Caco-2 (cell line): ENCODE measurements at regions of chr3 and their contacts with region 1.

Region 1: DNA sequence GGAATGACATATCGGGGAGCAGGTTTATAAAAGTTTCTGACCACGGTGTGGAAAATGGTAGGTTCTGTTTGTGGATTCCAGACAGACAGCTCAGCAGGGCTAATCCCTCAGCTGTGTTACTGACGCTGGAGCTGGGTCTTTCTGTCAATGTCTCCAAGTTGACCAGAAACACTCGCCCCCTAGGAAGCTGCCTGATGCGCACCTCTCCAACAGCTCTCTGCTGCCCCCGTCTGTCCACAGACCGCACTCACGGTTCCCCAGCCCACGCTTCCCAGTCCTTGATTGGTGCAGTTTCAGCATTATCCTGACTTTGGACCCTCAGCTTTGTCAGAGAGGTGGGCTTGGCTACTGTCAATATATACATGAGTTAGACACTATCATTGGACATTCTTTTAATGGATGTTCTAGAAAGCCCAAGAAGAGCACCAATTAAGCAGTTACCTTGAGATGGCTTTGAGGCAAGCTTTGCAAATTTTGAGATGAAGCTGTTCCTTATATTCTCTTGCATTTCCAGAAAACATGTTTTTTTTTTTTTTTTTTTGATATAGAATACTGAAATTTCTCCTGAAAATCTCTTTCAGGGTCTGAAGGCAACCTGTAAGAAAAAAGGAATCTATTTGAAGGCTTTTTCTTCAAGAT is 98.9 kb upstream of the TBC1D5 start:
- DNase-seq: peak; percentile 75 to 86
- H3K4me3 ChIP-seq: no peak overlapping the region
- H3K4me3 Mint-ChIP-seq: no peak overlapping the region
- H3K27ac Mint-ChIP-seq: no peak overlapping the region
- H3K4me1 ChIP-seq: no peaks in the 10 kb centered on the region
- H3K4me1 Mint-ChIP-seq: peaks cover 5% of the 10 kb centered on the region
- H3K27me3 ChIP-seq: no peaks in the 10 kb centered on the region
- H3K27me3 Mint-ChIP-seq: no peaks in the 10 kb centered on the region
- CTCF ChIP-seq: peak; percentile 87 to 97

Region 2: GRCh38 chr3:17258823-17259436 is 582.4 kb before region 1 on chr3:
- CTCF ChIA-PET with region 1: no interaction called
- POLR2A ChIA-PET with region 1: no interaction called
- intact Hi-C with region 1: loop called (anchors 2 kb)
- DNase-seq: peak in 1 of 2 experiments; percentile 30
- H3K4me3 ChIP-seq: no peak overlapping the region
- H3K4me3 Mint-ChIP-seq: no peak overlapping the region
- H3K27ac Mint-ChIP-seq: no peak overlapping the region
- H3K4me1 ChIP-seq: no peaks in the 10 kb centered on the region
- H3K4me1 Mint-ChIP-seq: no peaks in the 10 kb centered on the region
- H3K27me3 ChIP-seq: no peaks in the 10 kb centered on the region
- H3K27me3 Mint-ChIP-seq: no peaks in the 10 kb centered on the region
- CTCF ChIP-seq: peak; percentile 59 to 64

Region 3: GRCh38 chr3:17562845-17563244 is 278.5 kb before region 1 on chr3:
- CTCF ChIA-PET with region 1: no interaction called
- POLR2A ChIA-PET with region 1: no interaction called
- intact Hi-C with region 1: loop called (anchors 10 kb)
- DNase-seq: no peak
- H3K4me3 ChIP-seq: no peak overlapping the region
- H3K4me3 Mint-ChIP-seq: no peak overlapping the region
- H3K27ac Mint-ChIP-seq: no peak overlapping the region
- H3K4me1 ChIP-seq: 0 out of 2 replicates have a peak, but pooled peaks cover 7% of the 10 kb centered on the region
- H3K4me1 Mint-ChIP-seq: peaks cover 4% of the 10 kb centered on the region
- H3K27me3 ChIP-seq: no peaks in the 10 kb centered on the region
- H3K27me3 Mint-ChIP-seq: no peaks in the 10 kb centered on the region
- CTCF ChIP-seq: no peak

Region 4: DNA sequence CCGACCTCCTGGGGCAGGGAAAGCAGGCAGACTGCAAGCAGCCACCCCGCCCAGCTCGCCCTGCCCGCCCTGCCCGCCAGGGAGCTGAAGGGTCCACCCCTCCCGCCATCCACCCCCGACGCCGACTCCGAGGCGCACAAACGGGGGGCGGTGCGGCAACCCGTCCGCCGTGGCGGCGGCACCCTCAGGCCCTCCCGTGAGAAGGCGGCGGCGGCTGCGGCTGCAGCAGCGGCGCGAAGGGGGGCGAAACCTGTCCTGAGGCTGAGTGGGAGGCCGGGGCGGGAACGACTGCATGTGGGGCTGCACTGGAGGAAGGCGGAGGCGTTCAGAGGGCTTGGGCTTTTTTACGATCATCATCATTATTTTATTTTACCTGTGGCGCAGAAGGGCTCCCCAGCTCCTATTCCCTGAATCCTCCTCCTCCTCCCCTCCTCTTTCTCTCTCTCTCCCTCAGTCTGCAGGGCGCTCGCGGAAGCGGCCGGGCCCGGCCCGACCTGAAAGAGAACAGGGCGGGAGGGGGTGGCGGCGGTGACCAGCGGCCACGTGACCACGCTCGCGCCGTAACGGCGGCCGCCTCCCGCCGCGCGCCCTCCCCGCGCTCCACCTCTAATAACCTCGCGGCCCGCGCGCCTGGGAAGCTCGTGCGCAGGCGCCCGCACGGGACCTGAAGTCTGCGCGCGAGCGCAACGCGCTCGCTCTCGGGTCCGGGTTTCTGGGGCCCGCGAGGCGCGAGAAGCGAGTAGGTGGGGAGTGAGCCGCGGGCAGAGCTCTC is 99.0 kb before region 1 on chr3 and contains the start of gene TBC1D5:
- CTCF ChIA-PET with region 1: interaction called, 11 read pairs
- POLR2A ChIA-PET with region 1: no interaction called
- intact Hi-C with region 1: loop called (anchors 1 kb)
- DNase-seq: peak; percentile 97
- H3K4me3 ChIP-seq: peak within 1 kb of the TSS; percentile 77
- H3K4me3 Mint-ChIP-seq: peak within 1 kb of the TSS; percentile 82
- H3K27ac Mint-ChIP-seq: peak within 1 kb of the TSS; percentile 80
- H3K4me1 ChIP-seq: peaks cover 11% of the 10 kb centered on the region; the same call in 1 of the 2 replicates
- H3K4me1 Mint-ChIP-seq: peaks cover 17% of the 10 kb centered on the region
- H3K27me3 ChIP-seq: no peaks in the 10 kb centered on the region
- H3K27me3 Mint-ChIP-seq: no peaks in the 10 kb centered on the region
- CTCF ChIP-seq: no peak
- total RNA-seq, gene TBC1D5: 36.4 and 36.5 TPM in 2 replicates

Region 5: DNA sequence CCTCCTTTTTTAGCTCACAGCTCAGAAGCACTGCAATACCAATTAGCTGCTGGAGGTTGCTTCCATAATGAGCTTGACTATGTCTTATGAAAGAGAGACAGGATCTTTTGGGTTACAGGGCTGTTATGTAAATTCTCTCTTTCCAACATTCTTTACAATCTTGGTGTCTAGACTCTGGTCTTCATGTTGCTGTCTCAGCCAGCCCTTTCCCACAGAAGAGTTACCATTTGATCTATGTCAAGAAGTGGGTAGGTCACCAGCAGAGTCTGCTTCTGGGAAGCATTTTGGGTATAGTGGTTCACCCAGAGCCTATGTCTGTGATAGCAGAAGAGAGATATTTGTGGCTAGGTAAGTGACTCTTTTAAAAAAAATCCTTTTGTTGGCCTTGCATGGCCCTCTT is 349.3 kb after region 1 on chr3:
- CTCF ChIA-PET with region 1: interaction called, 10 read pairs
- POLR2A ChIA-PET with region 1: no interaction called
- intact Hi-C with region 1: no loop called
- DNase-seq: no peak
- H3K4me3 ChIP-seq: no peak overlapping the region
- H3K4me3 Mint-ChIP-seq: no peak overlapping the region
- H3K27ac Mint-ChIP-seq: no peak overlapping the region
- H3K4me1 ChIP-seq: no peaks in the 10 kb centered on the region
- H3K4me1 Mint-ChIP-seq: no peaks in the 10 kb centered on the region
- H3K27me3 ChIP-seq: no peaks in the 10 kb centered on the region
- H3K27me3 Mint-ChIP-seq: no peaks in the 10 kb centered on the region
- CTCF ChIP-seq: no peak